ENCODE measurements at regions of chr19 and their contacts with region 1.

Region 1: DNA sequence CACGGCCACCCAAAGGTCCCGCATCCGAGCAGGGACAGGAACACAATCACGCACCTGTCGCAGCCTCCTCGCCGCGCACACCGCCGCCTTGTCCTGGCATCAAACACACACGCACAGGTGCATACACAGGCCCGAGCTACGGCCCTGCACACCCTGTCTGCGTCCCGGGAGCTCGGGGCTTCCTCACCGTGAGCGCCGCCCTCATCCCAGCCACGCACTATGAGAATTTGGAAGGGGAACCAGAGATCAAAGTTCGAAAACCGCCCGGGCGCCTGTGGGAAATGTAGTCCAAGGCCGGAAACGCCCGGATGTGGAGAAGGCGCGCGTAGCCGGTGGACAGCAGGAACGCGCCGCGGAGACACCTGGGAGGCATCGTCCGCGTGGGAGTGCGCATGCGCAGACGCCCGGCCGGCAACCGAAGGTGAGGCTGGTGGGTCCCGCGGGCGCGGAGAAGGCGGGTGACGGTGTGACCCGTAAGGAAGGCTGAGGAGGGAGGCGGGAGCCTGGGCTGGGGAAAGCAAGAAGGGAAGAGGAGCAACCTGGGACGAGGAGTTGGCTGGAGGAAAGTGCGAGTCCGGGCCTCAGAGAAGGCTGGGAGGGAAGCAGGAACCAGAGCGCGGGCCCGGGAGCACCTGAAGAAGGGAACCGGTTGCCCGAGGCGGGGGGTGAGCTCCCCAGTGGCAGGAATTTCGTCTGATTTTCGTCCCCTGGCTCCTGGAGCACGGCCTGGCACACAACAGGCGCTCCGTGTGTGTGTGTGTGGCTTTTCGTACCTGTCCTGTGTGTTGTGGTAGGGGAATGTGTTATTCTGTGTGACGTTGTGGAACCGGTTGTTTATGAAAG is at the start of gene ZNF567:
- DNase-seq: peak; percentile 94 to 96 (median 95)
- H3K4me3 ChIP-seq: peak within 1 kb of the TSS; percentile 62 to 80
- H3K4me3 Mint-ChIP-seq: peak within 1 kb of the TSS; percentile 97 to 100 (median 99)
- H3K27ac ChIP-seq: peak within 1 kb of the TSS; percentile 75
- H3K27ac Mint-ChIP-seq: peak within 1 kb of the TSS; percentile 95 to 99 (median 97)
- H3K4me1 ChIP-seq: peaks cover 22% of the 10 kb centered on the region
- H3K4me1 Mint-ChIP-seq: peaks cover 22 to 49% (median 30%) of the 10 kb centered on the region in 4 donors
- H3K27me3 ChIP-seq: no peaks in the 10 kb centered on the region
- H3K27me3 Mint-ChIP-seq: no peaks in the 10 kb centered on the region
- total RNA-seq, gene ZNF567: 17.0 to 19.8 TPM

Region 2: GRCh38 chr19:36489118-36489919 is 198.1 kb before region 1 on chr19 and contains the start of gene ZNF566:
- CTCF ChIA-PET with region 1: no interaction called
- POLR2A ChIA-PET with region 1: interaction called, 10 read pairs
- intact Hi-C with region 1: loop called (anchors 5 kb)
- DNase-seq: peak; percentile 94 to 98 (median 96)
- H3K4me3 ChIP-seq: peak within 1 kb of the TSS; percentile 92 to 99
- H3K4me3 Mint-ChIP-seq: peak within 1 kb of the TSS; percentile 97 to 100 (median 98)
- H3K27ac ChIP-seq: peak within 1 kb of the TSS; percentile 93
- H3K27ac Mint-ChIP-seq: peak within 1 kb of the TSS; percentile 98 to 99 (median 98)
- H3K4me1 ChIP-seq: peaks cover 24% of the 10 kb centered on the region
- H3K4me1 Mint-ChIP-seq: peaks cover 22 to 36% (median 28%) of the 10 kb centered on the region in 4 donors
- H3K27me3 ChIP-seq: no peaks in the 10 kb centered on the region
- H3K27me3 Mint-ChIP-seq: no peaks in the 10 kb centered on the region
- total RNA-seq, gene ZNF566: 25.9 to 30.6 TPM

Region 3: DNA sequence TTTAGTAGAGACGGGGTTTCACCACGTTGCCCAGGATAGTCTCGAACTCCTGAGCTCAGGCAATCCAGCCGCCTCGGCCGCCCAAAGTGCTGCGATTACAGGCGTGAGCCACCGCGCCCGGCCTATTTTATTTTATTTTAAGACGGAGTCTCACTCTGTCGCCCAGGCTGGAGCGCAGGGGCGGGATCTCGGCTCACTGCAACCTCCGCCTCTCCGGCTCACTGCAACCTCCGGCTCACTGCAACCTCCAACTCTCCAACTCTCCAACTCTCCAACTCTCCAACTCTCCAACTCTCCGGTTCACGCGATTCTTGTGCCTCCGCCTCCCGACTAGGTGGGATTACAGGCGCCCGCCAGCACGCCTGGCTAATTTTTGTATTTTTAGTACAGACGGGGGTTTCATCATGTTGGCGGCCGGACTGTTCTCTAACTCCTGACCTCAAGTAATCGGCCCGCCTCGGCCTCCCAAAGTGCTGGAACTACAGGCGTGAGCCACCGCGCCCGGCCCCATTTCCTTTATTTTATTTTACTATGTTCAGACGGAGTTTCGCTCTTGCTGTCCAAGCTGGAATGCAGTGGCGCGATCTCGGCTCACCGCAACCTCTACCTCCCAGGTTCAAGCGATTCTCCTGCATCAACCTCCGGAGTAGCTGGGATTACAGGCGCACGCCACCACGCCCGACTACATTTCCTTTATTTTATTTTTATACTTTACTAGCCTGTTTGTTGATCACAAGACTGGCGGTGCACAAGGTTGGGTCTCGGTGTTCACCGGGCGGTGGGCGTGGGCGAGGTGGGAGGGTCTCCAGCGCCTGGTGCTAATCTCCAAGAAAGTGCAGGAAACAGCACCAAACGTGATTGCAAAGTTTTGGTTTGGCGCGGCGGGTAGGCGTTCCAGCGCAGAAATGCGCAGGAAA is 108.9 kb after region 1 on chr19:
- CTCF ChIA-PET with region 1: no interaction called
- POLR2A ChIA-PET with region 1: no interaction called
- intact Hi-C with region 1: loop called (anchors 1 kb)
- DNase-seq: no peak
- H3K4me3 ChIP-seq: peak overlapping the region; percentile 94 to 96
- H3K4me3 Mint-ChIP-seq: peak overlapping the region; percentile 99 to 100 (median 99)
- H3K27ac ChIP-seq: peak overlapping the region; percentile 79
- H3K27ac Mint-ChIP-seq: peak overlapping the region; percentile 99 to 100 (median 100)
- H3K4me1 ChIP-seq: peaks cover 4% of the 10 kb centered on the region
- H3K4me1 Mint-ChIP-seq: peaks cover 5 to 35% (median 21%) of the 10 kb centered on the region in 4 donors
- H3K27me3 ChIP-seq: no peaks in the 10 kb centered on the region
- H3K27me3 Mint-ChIP-seq: peaks cover 0 to 6% of the 10 kb centered on the region in 2 donors

Region 4: DNA sequence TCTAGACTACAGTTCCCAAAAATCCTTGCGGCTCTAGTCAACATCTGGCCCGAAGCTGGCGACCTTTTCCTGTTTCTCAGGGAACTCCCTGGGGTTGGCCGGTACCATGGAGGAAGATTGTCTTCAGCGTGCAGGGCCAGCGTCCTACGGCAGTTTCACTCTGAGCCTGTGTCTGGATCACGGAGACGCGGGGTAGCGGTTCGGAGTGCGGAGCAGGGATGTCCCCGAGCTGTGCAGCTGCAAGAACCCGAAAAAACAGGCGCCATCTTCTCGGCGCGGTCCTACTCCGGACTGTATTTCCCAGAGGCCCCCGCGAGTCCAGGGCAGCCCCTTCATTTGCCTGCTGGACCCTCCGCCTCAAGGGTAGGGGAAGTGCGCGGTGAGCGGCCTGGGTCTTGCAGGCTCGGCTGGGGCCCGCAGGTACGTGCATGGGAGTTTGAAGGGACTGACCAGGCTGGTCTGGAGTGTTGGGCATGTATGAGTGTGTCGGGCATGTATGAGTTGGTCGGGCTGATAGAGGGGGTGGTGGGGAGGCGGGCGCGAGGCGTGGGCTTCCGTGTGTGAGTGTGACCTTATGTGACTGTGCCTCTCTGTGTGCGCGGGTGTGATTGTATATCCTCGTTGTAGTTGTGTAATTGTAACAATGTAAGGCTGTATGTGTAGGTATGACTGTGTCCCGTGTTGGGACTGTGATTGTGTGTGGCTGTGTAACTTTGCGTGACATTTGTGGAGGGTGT is 530.6 kb after region 1 on chr19 and contains the start of gene ZNF383:
- CTCF ChIA-PET with region 1: no interaction called
- POLR2A ChIA-PET with region 1: interaction called, 5 read pairs
- intact Hi-C with region 1: loop called (anchors 10 kb)
- DNase-seq: peak; percentile 80 to 87 (median 83)
- H3K4me3 ChIP-seq: peak within 1 kb of the TSS; percentile 85 to 99
- H3K4me3 Mint-ChIP-seq: peak within 1 kb of the TSS; percentile 89 to 98 (median 91)
- H3K27ac ChIP-seq: peak within 1 kb of the TSS; percentile 80
- H3K27ac Mint-ChIP-seq: peak within 1 kb of the TSS; percentile 88 to 98 (median 96)
- H3K4me1 ChIP-seq: peaks cover 16% of the 10 kb centered on the region
- H3K4me1 Mint-ChIP-seq: peaks cover 19 to 40% (median 31%) of the 10 kb centered on the region in 4 donors
- H3K27me3 ChIP-seq: no peaks in the 10 kb centered on the region
- H3K27me3 Mint-ChIP-seq: no peaks in the 10 kb centered on the region
- total RNA-seq, gene ZNF383: 32.0 to 34.0 TPM